ENCODE measurements at regions of chr3 and their contacts with region 1.

Region 1: DNA sequence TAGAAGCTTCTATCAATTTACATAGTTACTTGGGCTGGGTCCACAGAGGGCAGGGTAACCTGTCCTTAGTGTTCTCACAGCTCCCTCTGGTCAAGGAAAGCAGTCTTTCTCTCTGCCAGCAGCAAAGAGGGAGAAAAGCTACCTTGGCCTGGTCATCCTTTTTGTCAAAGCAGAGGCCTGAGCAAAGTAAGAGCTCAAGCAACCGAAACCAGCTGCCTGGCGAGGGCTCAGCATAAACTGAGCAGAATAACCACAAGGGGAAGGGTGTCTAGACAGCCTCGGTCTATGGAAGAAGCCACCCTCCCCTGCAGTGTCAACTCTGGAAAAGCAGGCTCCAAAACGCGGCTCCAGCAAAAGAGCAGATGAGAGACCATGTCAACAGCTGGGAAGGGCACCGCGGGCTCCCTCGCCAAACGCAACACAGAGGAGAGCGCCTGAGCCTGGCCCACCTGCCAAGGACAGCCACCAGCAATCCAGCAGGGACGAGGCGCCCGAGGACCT is 17.4 kb downstream of the LRIG1 start:
- DNase-seq: no peak
- H3K4me3 Mint-ChIP-seq: no peak overlapping the region
- H3K27ac Mint-ChIP-seq: no peak overlapping the region
- H3K4me1 Mint-ChIP-seq: peaks cover 41% of the 10 kb centered on the region
- H3K27me3 Mint-ChIP-seq: no peaks in the 10 kb centered on the region
- CTCF ChIP-seq: no peak

Region 2: GRCh38 chr3:66500576-66501482 is 17.4 kb after region 1 on chr3 and contains the start of gene LRIG1:
- CTCF ChIA-PET with region 1: no interaction called
- intact Hi-C with region 1: loop called (anchors 2 kb)
- DNase-seq: peak; percentile 99
- H3K4me3 Mint-ChIP-seq: peak within 1 kb of the TSS; percentile 98
- H3K27ac Mint-ChIP-seq: peak within 1 kb of the TSS; percentile 74
- H3K4me1 Mint-ChIP-seq: peaks cover 32% of the 10 kb centered on the region
- H3K27me3 Mint-ChIP-seq: no peaks in the 10 kb centered on the region
- CTCF ChIP-seq: no peak
- total RNA-seq, gene LRIG1: 10.0 and 14.7 TPM in 2 replicates

Region 3: DNA sequence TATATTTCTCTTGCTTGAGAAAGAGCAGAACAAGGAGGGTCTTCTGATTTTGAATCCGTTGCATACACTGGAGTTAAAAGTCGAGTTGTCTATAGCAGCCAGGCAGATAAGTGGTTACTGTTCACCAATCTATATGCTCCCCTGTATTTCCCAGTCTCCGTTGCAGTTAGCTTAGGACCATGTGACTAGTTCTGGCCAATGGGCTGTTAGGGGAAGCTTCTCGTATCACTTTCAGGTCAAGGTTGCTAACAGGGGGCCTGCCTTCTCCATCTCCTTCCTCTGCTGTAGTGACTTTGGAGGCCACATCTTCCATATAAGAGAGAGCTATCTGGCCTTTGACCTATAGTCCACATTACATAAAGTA is 326.1 kb after region 1 on chr3:
- CTCF ChIA-PET with region 1: no interaction called
- intact Hi-C with region 1: loop called (anchors 5 kb)
- DNase-seq: peak; percentile 30
- H3K4me3 Mint-ChIP-seq: no peak overlapping the region
- H3K27ac Mint-ChIP-seq: peak overlapping the region; percentile 24
- H3K4me1 Mint-ChIP-seq: peaks cover 12% of the 10 kb centered on the region
- H3K27me3 Mint-ChIP-seq: no peaks in the 10 kb centered on the region
- CTCF ChIP-seq: no peak

Region 4: GRCh38 chr3:66885326-66886000 is 402.0 kb after region 1 on chr3:
- CTCF ChIA-PET with region 1: no interaction called
- intact Hi-C with region 1: loop called (anchors 10 kb)
- DNase-seq: peak; percentile 60
- H3K4me3 Mint-ChIP-seq: no peak overlapping the region
- H3K27ac Mint-ChIP-seq: peak overlapping the region; percentile 94
- H3K4me1 Mint-ChIP-seq: peaks cover 21% of the 10 kb centered on the region
- H3K27me3 Mint-ChIP-seq: no peaks in the 10 kb centered on the region
- CTCF ChIP-seq: no peak

Measured in Calu3 (cell line).